RWPE1 (cell line): ENCODE measurements at regions of chr15 and their contacts with region 1.

Region 1: GRCh38 chr15:67836477-67836876 is 3.4 kb downstream of the RNU6-1 start:
- DNase-seq: peak; percentile 67
- H3K27ac ChIP-seq: no peak overlapping the region
- CTCF ChIP-seq: peak; percentile 91

Region 2: GRCh38 chr15:67456677-67457529 is 379.6 kb before region 1 on chr15:
- CTCF ChIA-PET with region 1: interaction called, 11 read pairs
- POLR2A ChIA-PET with region 1: no interaction called
- DNase-seq: peak; percentile 75
- H3K27ac ChIP-seq: no peak overlapping the region
- CTCF ChIP-seq: peak; percentile 97